H1 (cell line): ENCODE measurements at regions of chr3 and their contacts with region 1.

Region 1: DNA sequence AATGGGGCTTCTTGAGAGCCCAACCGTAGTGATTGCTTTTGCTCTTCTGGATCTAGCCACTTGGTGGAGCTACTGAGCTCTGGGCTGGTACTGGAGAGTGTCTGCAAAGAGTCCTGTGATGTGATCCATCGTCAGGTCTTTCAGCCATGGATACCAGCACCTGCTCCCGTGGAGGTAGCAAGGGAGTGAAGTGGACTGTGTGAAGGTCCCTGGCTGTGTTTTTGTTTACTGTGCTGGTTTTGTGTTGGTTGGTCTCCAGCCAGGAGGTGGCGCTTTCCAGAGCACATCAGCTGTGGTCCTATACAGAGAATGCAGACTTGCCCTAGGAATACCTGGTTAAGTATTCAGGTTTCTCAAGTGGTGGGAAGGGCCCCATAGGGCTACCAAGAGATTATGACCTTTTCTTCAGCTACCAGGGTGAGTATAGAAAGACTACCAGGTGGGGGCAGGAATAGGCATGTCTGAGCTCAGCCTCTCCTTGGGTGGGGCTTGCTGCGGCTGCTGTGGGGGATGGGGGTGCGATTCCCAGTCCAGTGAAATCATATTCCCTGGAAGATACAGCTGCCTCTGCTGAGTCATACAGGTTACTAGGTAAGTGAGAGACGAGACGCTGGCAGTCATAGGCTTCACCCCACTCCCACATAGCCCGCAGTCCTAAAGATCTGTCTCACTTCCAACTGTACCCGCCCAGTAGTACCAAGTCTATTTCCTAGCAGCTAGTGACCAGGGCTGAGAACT is 733.7 kb downstream of the ZNF385D start:
- DNase-seq: peak; percentile 31 to 78
- H3K4me3 ChIP-seq: no peak overlapping the region
- H3K27ac ChIP-seq: no peak overlapping the region
- H3K4me1 ChIP-seq: no peaks in the 10 kb centered on the region; a peak in 3 of 7 replicates
- H3K27me3 ChIP-seq: no peaks in the 10 kb centered on the region
- CTCF ChIP-seq: peak; percentile 33 to 78 (median 50)
- EP300 ChIP-seq: no peak
- POLR2A ChIP-seq: no peak
- RAD21 ChIP-seq: peak; percentile 52 to 58

Region 2: DNA sequence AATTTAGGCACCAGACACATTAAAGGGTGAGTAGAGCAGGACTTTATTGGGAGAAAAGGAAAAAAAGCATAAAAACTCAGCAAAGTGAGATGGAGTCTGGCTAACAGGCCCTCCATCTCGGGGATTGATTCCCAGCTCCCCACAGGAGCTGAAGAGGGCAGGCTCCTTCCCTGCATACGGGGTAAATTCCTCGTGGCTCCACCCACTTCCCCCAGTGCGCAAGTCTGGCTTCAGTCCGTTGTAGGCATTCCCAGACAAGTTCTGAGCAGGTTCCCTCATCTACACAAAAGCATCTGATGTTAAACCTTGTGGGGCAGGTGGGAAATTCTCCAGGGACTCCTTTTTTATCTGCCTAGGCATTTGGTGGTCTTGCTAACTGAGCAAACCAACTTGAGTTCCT is 11.1 kb after region 1 on chr3:
- CTCF ChIA-PET with region 1: interaction called, 15 read pairs
- POLR2A ChIA-PET with region 1: no interaction called
- DNase-seq: no peak
- H3K4me3 ChIP-seq: no peak overlapping the region
- H3K27ac ChIP-seq: no peak overlapping the region
- H3K4me1 ChIP-seq: no peaks in the 10 kb centered on the region
- H3K27me3 ChIP-seq: no peaks in the 10 kb centered on the region
- CTCF ChIP-seq: no peak
- EP300 ChIP-seq: no peak
- POLR2A ChIP-seq: no peak
- RAD21 ChIP-seq: no peak

Region 3: DNA sequence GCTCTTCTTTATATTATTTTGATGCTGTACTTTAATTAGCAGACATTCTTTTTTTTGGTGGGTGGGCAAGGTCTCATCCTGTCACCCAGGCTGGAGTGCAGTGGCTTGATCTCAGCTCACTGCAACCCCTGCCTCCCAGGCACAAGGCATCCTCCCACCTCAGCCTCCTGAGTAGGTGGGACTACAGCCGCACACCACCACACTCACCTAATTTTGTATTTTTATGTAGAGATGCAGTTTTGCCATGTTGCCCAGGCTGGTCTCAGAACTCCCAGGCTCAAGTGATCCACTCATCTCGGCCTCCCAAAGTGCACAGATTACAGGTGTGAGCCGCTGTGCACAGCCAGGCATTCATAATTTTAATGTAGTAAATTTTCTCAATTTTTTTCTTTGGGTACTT is 125.7 kb after region 1 on chr3:
- CTCF ChIA-PET with region 1: no interaction called
- POLR2A ChIA-PET with region 1: no interaction called
- DNase-seq: no peak
- H3K4me3 ChIP-seq: no peak overlapping the region
- H3K27ac ChIP-seq: no peak overlapping the region
- H3K4me1 ChIP-seq: peaks cover 0 to 5% (median 2%) of the 10 kb centered on the region in 4 experiments; a peak in 3 of 7 replicates
- H3K27me3 ChIP-seq: no peaks in the 10 kb centered on the region
- CTCF ChIP-seq: no peak
- EP300 ChIP-seq: no peak
- POLR2A ChIP-seq: no peak
- RAD21 ChIP-seq: no peak

Region 4: DNA sequence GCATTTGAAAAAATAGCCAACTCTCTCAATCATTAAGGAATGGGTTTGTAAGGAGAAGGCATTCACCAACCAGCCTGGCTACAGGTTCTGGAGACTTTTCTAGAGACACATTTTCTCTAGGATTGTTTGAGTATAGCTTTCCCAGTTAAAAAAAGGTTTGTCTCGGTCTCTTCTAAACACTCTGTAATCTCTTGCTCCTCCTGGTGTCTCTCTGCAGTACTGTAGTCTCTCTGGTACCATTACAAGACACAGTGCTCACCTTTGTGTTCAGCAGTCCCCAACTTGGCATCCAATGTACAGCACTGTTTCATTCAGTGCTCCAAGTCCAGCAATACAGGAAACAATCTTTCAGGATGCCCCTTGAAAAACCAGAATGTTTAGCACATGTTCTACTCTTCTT is 199.3 kb after region 1 on chr3:
- CTCF ChIA-PET with region 1: interaction called, 10 read pairs
- POLR2A ChIA-PET with region 1: no interaction called
- DNase-seq: peak in 1 of 2 experiments; percentile 49
- H3K4me3 ChIP-seq: no peak overlapping the region
- H3K27ac ChIP-seq: no peak overlapping the region
- H3K4me1 ChIP-seq: no peaks in the 10 kb centered on the region
- H3K27me3 ChIP-seq: no peaks in the 10 kb centered on the region
- CTCF ChIP-seq: peak in 2 of 3 experiments; percentile 55 to 69; a peak in 3 of 4 replicates
- EP300 ChIP-seq: no peak
- POLR2A ChIP-seq: no peak
- RAD21 ChIP-seq: peak; percentile 74 to 82